ENCODE measurements at regions of chr5 and their contacts with region 1.

Region 1: DNA sequence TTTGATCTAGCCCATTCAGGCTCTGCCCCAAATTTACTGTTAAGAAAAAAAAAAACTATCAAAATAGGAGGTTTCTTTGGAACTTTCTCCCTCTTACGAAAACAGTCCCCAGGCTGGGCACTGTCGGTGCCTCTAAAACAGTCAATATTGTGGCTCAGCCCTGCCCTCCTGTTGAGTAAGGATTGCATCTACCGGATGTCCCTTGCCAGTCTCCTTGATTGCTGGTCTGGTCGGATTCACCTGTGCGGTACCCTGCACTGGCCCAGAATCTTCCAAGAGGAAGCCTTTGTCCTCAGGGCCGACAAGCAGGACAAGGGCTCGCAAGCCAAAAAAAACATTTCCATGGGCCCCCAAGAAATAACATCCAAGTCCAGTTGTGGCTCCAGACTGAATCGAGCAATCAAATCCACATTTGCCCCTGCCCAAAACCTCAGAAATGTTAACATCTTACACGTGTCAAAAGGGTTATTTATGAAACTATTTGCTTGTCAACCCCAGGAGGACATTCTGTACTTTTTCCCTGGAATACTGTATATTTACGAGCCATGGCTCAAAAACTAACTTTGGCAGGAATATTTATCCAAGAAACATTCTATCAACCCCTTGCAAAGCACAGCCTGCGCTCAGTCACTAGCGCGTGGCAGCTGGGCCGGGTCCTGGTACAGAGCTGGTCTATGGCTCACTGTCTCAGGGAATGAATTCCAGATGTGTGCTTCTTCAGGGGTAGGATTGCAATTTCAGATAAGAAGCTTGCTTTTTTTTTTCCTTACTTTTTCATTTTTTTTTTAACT is 129.2 kb upstream of the ADRA1B start:
- DNase-seq: peak; percentile 49 to 89
- ATAC-seq: peak; percentile 86
- H3K4me3 ChIP-seq: no peak overlapping the region
- H3K27ac ChIP-seq: peak overlapping the region; percentile 44 to 99
- H3K4me1 ChIP-seq: peaks cover 3 to 4% of the 10 kb centered on the region in 2 donors
- H3K27me3 ChIP-seq: no peaks in the 10 kb centered on the region

Region 2: GRCh38 chr5:159638954-159639559 is 148.0 kb before region 1 on chr5:
- intact Hi-C with region 1: no loop called
- DNase-seq: no peak
- ATAC-seq: no peak
- H3K4me3 ChIP-seq: no peak overlapping the region
- H3K27ac ChIP-seq: no peak overlapping the region
- H3K4me1 ChIP-seq: no peaks in the 10 kb centered on the region
- H3K27me3 ChIP-seq: no peaks in the 10 kb centered on the region

Region 3: GRCh38 chr5:159883522-159883950 is 96.4 kb after region 1 on chr5:
- intact Hi-C with region 1: loop called in 1 of 2 experiments (anchors 5 kb)
- DNase-seq: no peak
- ATAC-seq: peak; percentile 80
- H3K4me3 ChIP-seq: no peak overlapping the region
- H3K27ac ChIP-seq: peak overlapping the region; percentile 64 to 93
- H3K4me1 ChIP-seq: peaks cover 0 to 4% of the 10 kb centered on the region in 2 donors
- H3K27me3 ChIP-seq: no peaks in the 10 kb centered on the region

Region 4: GRCh38 chr5:160030631-160031377 is 243.7 kb after region 1 on chr5:
- intact Hi-C with region 1: no loop called
- DNase-seq: no peak
- ATAC-seq: no peak
- H3K4me3 ChIP-seq: no peak overlapping the region
- H3K27ac ChIP-seq: no peak overlapping the region
- H3K4me1 ChIP-seq: no peaks in the 10 kb centered on the region
- H3K27me3 ChIP-seq: no peaks in the 10 kb centered on the region

Region 5: DNA sequence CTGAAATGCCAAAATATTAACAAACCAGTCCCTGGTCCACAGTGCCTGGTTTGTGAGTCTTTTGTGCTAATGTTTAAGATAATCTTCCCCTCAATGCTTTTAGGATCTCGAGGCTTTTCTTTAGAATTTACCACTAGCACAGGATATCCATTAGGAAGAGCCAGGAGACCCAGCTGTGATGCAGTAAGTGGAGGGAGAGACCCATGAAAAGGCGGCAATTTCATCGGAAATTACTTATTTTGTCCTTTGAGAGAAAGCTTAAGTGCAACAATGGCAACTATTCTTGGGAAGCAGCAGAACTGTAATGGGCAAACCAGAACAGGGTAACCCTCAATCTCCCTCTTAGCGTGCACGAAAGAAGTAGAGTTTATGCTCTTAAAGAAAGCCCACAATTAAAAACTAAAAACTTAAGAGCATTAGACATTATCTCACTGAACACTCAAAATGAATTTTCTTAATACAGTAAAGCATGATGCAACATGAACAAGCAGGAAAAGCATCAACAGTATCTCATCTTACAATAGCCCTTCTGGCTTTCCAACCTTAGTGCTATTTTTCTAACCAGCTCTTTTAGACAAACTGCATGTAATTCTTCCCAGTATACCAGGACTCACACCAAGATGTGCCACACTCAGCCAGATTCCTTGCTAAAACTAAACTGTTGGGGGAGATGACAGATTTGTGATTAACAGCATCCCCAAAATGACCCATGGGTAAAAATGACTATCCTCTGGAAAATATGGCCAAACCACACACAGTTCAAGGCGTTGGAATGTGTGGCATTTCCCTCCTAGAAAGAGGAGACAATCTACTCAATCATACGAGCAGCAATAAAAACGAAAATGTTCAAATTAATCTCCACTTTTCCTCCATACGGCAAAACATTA is 295.8 kb after region 1 on chr5:
- intact Hi-C with region 1: no loop called
- DNase-seq: no peak
- ATAC-seq: peak; percentile 40
- H3K4me3 ChIP-seq: peak overlapping the region in 1 of 2 donors; percentile 20
- H3K27ac ChIP-seq: peak overlapping the region in 1 of 2 donors; percentile 74
- H3K4me1 ChIP-seq: peaks cover 7 to 14% of the 10 kb centered on the region in 2 donors
- H3K27me3 ChIP-seq: no peaks in the 10 kb centered on the region

Measured in aorta (tissue), 5 donors.